ENCODE measurements at regions of chrX and their contacts with region 1.

Region 1: GRCh38 chrX:38260231-38260630 is 39.6 kb upstream of the SRPX start:
- DNase-seq: peak; percentile 54
- H3K4me3 Mint-ChIP-seq: no peak overlapping the region
- H3K27ac Mint-ChIP-seq: no peak overlapping the region
- H3K4me1 Mint-ChIP-seq: no peaks in the 10 kb centered on the region
- H3K27me3 Mint-ChIP-seq: no peaks in the 10 kb centered on the region

Region 2: DNA sequence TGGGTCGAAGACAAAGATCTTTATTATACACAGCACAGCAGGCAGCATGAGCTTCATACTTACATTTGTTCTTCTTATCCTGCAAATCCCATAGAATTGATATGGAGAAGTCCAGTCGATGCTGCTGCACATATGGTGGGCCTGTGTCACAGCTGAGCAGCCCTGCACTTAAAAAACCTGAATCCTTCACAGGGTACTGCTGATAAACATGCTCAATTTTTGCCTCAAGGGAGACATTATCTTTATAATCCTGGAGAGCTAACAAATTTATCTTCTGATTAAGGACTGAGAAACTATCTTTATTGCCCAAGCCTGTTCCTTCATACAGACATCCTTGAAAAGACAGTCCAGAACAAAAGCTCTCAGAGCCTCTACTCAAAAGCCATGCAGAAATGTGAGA is 1686.5 kb before region 1 on chrX:
- intact Hi-C with region 1: no loop called
- DNase-seq: no peak
- H3K4me3 Mint-ChIP-seq: no peak overlapping the region
- H3K27ac Mint-ChIP-seq: no peak overlapping the region
- H3K4me1 Mint-ChIP-seq: no peaks in the 10 kb centered on the region
- H3K27me3 Mint-ChIP-seq: no peaks in the 10 kb centered on the region

Region 3: GRCh38 chrX:38327007-38327774 is 67.0 kb after region 1 on chrX and contains the start of gene RPGR:
- intact Hi-C with region 1: loop called (anchors 1 kb)
- DNase-seq: peak; percentile 97
- H3K4me3 Mint-ChIP-seq: peak within 1 kb of the TSS; percentile 90
- H3K27ac Mint-ChIP-seq: peak within 1 kb of the TSS; percentile 97
- H3K4me1 Mint-ChIP-seq: peaks cover 14% of the 10 kb centered on the region
- H3K27me3 Mint-ChIP-seq: no peaks in the 10 kb centered on the region
- total RNA-seq, gene RPGR: 7.7 and 8.6 TPM in 2 replicates